ENCODE measurements at regions of chr9 and their contacts with region 1.

Region 1: GRCh38 chr9:75979146-75979761 is 88.8 kb downstream of the PCSK5 start:
- DNase-seq: peak; percentile 19 to 38 (median 36)
- H3K4me3 ChIP-seq: no peak overlapping the region
- H3K27ac ChIP-seq: no peak overlapping the region
- H3K4me1 ChIP-seq: no peaks in the 10 kb centered on the region
- H3K27me3 ChIP-seq: no peaks in the 10 kb centered on the region

Region 2: DNA sequence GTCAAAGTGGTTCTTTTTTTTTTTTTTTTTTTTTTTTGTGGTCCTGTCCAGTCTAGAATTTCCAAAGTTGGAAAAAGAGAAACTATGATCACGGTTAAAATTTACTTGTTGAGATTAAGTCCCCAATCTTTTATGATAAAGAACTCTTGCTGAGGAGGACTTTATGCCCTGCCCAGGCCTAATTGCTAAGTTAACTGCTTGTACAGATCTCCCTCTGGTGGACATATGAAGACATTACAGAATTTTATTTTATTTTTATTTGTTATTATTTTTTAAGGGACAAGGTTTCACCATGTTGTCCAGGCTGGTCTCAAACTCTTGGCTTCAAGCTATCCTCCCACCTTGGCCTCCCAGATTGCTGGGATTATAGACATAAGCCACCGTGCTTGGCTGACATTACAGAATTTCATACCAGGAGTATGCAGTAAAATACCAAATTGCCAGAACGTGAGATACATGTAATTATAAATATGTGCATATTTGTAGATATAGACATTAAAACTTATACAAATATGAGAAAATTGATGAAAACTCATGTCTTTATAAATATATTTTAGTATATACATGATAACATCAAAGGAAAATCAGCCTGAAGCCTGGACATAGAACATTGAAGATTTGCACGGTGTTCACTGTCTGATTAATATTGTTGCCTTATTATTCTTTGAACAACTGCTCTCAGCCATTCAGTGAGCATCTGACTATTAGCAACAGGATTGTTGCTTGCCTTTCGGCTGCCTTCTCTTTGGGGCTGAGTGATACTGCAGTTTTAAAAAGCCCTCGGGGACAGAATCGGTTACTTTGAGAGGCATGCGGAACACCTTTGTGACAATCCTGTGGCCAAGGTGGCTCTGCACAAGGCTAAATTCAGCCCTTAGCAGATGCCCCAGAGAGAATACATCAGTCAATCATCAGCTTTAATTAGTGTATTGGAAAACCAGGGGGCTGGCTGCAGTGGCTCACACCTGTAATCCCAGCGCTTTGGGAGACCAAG is 324.0 kb after region 1 on chr9:
- CTCF ChIA-PET with region 1: interaction called, 21 read pairs
- POLR2A ChIA-PET with region 1: no interaction called
- DNase-seq: peak; percentile 59 to 79 (median 77)
- H3K4me3 ChIP-seq: no peak overlapping the region
- H3K27ac ChIP-seq: no peak overlapping the region
- H3K4me1 ChIP-seq: no peaks in the 10 kb centered on the region
- H3K27me3 ChIP-seq: no peaks in the 10 kb centered on the region